ENCODE measurements at regions of chr3 and their contacts with region 1.

Region 1: DNA sequence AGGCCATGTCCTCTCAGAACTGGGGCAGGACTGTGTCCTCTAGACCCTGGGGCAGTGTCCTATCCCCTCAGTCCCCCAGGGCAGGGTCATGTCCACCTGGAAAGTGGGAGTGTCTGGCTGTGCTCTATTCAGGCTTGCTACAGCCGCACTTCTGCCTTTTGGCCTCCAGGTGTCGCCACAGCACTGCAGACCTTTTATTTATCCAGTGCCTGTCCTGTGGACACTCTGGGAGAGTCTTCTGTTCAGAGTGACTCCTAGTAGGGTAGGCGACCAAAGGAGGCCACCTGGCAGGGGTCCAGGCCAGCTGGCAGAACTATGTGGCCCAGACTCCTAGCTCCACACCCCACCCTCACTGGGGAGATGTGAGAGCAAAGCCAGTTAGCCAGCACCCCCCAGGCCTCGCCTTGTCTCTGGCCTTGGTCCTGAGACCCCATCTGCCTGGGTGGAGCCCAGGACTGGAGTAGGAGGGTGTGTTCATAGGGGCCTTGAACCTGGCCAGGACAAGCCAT is 3.9 kb downstream of the TMIE start:
- DNase-seq: peak; percentile 86
- CTCF ChIP-seq: peak; percentile 96

Region 2: GRCh38 chr3:46820852-46821251 is 115.8 kb after region 1 on chr3:
- in situ Hi-C with region 1: no loop called
- DNase-seq: no peak
- CTCF ChIP-seq: no peak

Region 3: DNA sequence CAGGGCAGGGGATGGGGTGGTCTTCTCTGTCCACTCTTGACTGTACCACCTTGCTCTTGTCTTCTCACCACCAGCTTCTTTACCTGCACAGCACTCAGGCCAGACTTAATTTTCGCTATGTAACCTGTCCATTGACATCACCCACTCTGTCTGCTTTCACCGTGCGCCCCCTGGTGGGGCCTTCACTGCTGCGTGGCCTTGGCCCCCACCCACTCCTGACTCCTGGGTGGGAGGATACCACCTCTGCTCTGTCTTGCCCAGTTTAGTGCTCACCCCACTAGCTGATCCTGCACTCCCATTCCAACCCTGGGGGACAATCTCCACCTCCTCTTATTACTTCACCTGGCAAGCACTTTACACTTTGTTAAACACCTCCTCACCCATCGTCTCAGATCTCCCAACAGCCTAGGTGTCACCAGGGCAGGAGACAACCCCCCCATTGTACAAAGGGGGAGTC is 190.2 kb after region 1 on chr3:
- in situ Hi-C with region 1: loop called (anchors 25 kb)
- DNase-seq: peak; percentile 85
- CTCF ChIP-seq: peak; percentile 87

Measured in GM13976 (cell line).